Ascending aorta (tissue), 2 donors: ENCODE measurements at regions of chr17 and their contacts with region 1.

Region 1: GRCh38 chr17:77476931-77477877 is 336.4 kb downstream of the SEC14L1 start:
- DNase-seq: peak; percentile 73 to 96
- H3K4me3 ChIP-seq: peak overlapping the region in 1 of 2 donors; percentile 14
- H3K27ac ChIP-seq: peak overlapping the region; percentile 84 to 92
- H3K4me1 ChIP-seq: peaks cover 21 to 48% of the 10 kb centered on the region in 2 donors
- H3K27me3 ChIP-seq: no peaks in the 10 kb centered on the region
- CTCF ChIP-seq: peak in 1 of 3 experiments; percentile 12

Region 2: DNA sequence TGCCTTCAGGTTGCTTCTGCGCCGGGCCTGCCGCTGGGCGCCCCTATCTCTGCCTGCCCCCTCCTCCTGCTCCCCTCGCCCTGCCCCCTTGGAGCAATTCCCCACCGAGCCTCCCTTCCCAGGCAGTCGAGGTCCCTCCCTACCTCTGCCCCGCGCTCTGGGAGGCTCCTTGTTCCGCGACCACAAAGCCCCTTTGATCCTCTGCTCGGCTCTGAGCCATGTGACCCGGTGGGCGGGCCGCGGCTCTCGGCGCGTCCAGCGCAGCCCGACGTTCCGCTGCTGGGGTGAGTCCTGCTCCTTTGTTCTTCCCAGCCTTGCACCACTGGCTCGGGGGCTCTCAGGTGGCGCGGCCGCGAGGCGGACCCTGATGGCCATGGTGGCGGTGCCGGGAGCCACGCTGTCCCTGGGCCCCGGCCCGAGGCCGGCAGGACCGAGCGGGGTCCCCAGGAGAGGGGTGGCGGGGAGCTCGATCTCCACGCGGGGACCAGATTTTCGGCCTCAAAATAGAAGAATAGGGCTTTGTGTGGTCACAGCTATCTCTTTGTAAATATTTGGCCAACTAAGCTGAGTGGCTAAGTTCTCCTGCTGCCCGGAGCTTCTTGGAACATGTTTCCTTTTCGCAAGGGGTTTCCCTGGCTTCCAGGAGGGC is 25.8 kb before region 1 on chr17:
- intact Hi-C with region 1: loop called (anchors 1 kb)
- DNase-seq: peak in 1 of 2 donors; percentile 75
- H3K4me3 ChIP-seq: peak overlapping the region; percentile 31 to 71
- H3K27ac ChIP-seq: peak overlapping the region; percentile 50 to 72
- H3K4me1 ChIP-seq: peaks cover 15 to 18% of the 10 kb centered on the region in 2 donors
- H3K27me3 ChIP-seq: no peaks in the 10 kb centered on the region
- CTCF ChIP-seq: no peak

Region 3: GRCh38 chr17:77489911-77490255 is 12.7 kb after region 1 on chr17:
- intact Hi-C with region 1: no loop called
- DNase-seq: peak; percentile 69 to 94
- H3K4me3 ChIP-seq: no peak overlapping the region
- H3K27ac ChIP-seq: peak overlapping the region; percentile 54 to 55
- H3K4me1 ChIP-seq: peaks cover 10 to 16% of the 10 kb centered on the region in 2 donors
- H3K27me3 ChIP-seq: no peaks in the 10 kb centered on the region
- CTCF ChIP-seq: no peak